ENCODE measurements at regions of chr6 and their contacts with region 1.

Region 1: GRCh38 chr6:135054569-135055498 is at the start of gene HBS1L:
- DNase-seq: peak; percentile 98
- ATAC-seq: peak; percentile 98
- H3K4me3 ChIP-seq: peak within 1 kb of the TSS; percentile 89
- H3K27ac ChIP-seq: peak within 1 kb of the TSS; percentile 94
- H3K4me1 ChIP-seq: no peaks in the 10 kb centered on the region
- H3K27me3 ChIP-seq: no peaks in the 10 kb centered on the region
- CTCF ChIP-seq: no peak
- EP300 ChIP-seq: no peak; a peak in 1 of 4 replicates
- POLR2A ChIP-seq: peak; percentile 96
- RAD21 ChIP-seq: no peak
- polyA plus RNA-seq, gene HBS1L: 58.7 to 83.6 TPM

Region 2: DNA sequence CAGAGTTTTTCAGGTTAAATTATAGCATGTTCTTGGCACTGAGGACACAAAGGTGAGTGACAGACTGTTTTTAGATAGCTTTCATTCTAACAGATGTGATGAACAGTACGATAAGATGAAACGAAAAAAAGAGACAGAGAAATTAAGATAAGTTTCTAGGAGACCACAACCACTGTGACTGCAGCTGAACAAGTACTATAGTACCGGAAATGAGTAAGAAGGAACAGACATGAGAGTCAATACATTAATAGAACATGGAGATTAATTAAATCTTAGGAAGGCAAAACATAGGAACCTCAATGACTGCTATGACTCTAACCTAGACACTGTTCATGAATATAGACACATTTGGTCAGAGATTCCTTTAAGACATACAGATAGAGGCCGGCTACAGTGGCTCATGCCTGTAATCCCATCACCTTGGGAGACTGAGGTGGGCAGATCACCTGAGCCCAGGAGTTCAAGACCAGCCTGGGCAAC is 40.4 kb before region 1 on chr6:
- CTCF ChIA-PET with region 1: interaction called, 3 read pairs
- POLR2A ChIA-PET with region 1: interaction called, 3 read pairs
- RAD21 ChIA-PET with region 1: interaction called, 3 read pairs
- SMC1A ChIA-PET with region 1: interaction called, 14 read pairs
- in situ Hi-C with region 1: no loop called
- intact Hi-C with region 1: loop called (anchors 2 kb)
- DNase-seq: peak; percentile 77
- ATAC-seq: peak; percentile 94
- H3K4me3 ChIP-seq: no peak overlapping the region
- H3K27ac ChIP-seq: peak overlapping the region; percentile 55
- H3K4me1 ChIP-seq: peaks cover 20% of the 10 kb centered on the region
- H3K27me3 ChIP-seq: no peaks in the 10 kb centered on the region
- CTCF ChIP-seq: no peak
- EP300 ChIP-seq: peak; percentile 69 to 77; a peak in 3 of 4 replicates
- POLR2A ChIP-seq: no peak
- RAD21 ChIP-seq: no peak

Region 3: GRCh38 chr6:135044639-135045038 is 10.2 kb before region 1 on chr6:
- CTCF ChIA-PET with region 1: interaction called, 10 read pairs
- POLR2A ChIA-PET with region 1: interaction called, 12 read pairs
- RAD21 ChIA-PET with region 1: interaction called, 10 read pairs
- SMC1A ChIA-PET with region 1: interaction called, 18 read pairs
- in situ Hi-C with region 1: no loop called
- intact Hi-C with region 1: no loop called
- DNase-seq: no peak
- ATAC-seq: peak; percentile 20
- H3K4me3 ChIP-seq: peak overlapping the region; percentile 6; the same call in 1 of the 2 replicates
- H3K27ac ChIP-seq: 0 out of 2 replicates have a peak overlapping the region, but pooled peaks have one; percentile 13
- H3K4me1 ChIP-seq: peaks cover 9% of the 10 kb centered on the region
- H3K27me3 ChIP-seq: no peaks in the 10 kb centered on the region
- CTCF ChIP-seq: no peak
- EP300 ChIP-seq: no peak
- POLR2A ChIP-seq: no peak
- RAD21 ChIP-seq: no peak

Region 4: DNA sequence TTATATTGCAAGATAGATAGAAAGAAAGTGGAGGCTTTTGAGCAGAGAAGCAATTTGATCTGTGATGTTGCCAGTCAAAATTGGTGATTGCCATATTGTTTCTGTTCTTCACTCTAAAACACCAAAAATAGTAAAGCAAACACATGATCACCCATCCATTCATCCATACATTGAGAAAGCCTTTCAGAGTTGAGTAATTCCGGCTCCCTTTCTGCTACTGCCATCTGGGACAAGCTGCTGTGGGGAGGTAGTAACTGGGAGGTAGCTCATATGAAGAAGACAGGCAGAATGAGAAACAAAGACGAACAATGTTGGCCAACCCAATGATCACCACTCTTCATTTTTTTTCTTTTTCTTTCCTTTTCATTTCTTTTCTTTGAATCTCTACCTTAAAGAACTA is 50.9 kb after region 1 on chr6:
- CTCF ChIA-PET with region 1: no interaction called
- POLR2A ChIA-PET with region 1: interaction called, 5 read pairs
- RAD21 ChIA-PET with region 1: interaction called, 11 read pairs
- SMC1A ChIA-PET with region 1: interaction called, 8 read pairs
- in situ Hi-C with region 1: no loop called
- intact Hi-C with region 1: no loop called
- DNase-seq: no peak
- ATAC-seq: no peak
- H3K4me3 ChIP-seq: no peak overlapping the region
- H3K27ac ChIP-seq: no peak overlapping the region
- H3K4me1 ChIP-seq: peaks cover 3% of the 10 kb centered on the region
- H3K27me3 ChIP-seq: no peaks in the 10 kb centered on the region
- CTCF ChIP-seq: no peak
- EP300 ChIP-seq: no peak
- POLR2A ChIP-seq: no peak
- RAD21 ChIP-seq: no peak

Region 5: GRCh38 chr6:135162678-135163439 is 108.0 kb after region 1 on chr6:
- CTCF ChIA-PET with region 1: no interaction called
- POLR2A ChIA-PET with region 1: no interaction called
- RAD21 ChIA-PET with region 1: interaction called, 11 read pairs
- SMC1A ChIA-PET with region 1: interaction called, 3 read pairs
- in situ Hi-C with region 1: no loop called
- intact Hi-C with region 1: no loop called
- DNase-seq: no peak
- ATAC-seq: peak; percentile 65
- H3K4me3 ChIP-seq: peak overlapping the region; percentile 49; the same call in 1 of the 2 replicates
- H3K27ac ChIP-seq: peak overlapping the region; percentile 75
- H3K4me1 ChIP-seq: peaks cover 28% of the 10 kb centered on the region
- H3K27me3 ChIP-seq: no peaks in the 10 kb centered on the region
- CTCF ChIP-seq: peak; percentile 64 to 93 (median 93)
- EP300 ChIP-seq: no peak
- POLR2A ChIP-seq: no peak; the same call in 1 of the 2 replicates
- RAD21 ChIP-seq: peak; percentile 51

Measured in GM12878 (cell line).